Activated CD4-positive, alpha-beta T cell treated with anti-CD3 and anti-CD28 coated beads for 36 hours (primary cell): ENCODE measurements at regions of chr9 and their contacts with region 1.

Region 1: GRCh38 chr9:125631391-125632085 is 75.5 kb downstream of the MAPKAP1 start:
- DNase-seq: peak; percentile 59
- ATAC-seq: peak; percentile 51
- H3K4me3 Mint-ChIP-seq: no peak overlapping the region
- H3K27ac Mint-ChIP-seq: peak overlapping the region; percentile 26
- H3K4me1 Mint-ChIP-seq: peaks cover 83% of the 10 kb centered on the region
- H3K27me3 Mint-ChIP-seq: no peaks in the 10 kb centered on the region

Region 2: DNA sequence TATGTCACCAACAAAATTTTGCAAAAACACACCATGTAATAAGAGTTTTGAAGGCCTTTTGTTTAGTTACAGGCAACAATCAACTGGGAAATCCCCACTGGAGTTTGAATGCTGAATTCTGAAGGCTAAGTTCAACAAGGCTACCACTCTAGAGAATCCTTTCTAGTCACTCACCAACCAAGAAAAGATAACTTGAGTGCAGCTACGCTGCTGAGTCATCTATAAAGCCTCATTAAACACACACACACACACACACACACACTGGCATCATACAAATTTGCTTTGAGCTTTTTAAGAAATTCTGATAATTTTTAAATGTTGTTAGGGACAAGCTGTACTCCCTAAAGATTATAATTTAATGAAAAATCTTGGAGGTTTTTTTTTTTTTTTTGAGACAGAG is 1921.2 kb before region 1 on chr9:
- CTCF ChIA-PET with region 1: no interaction called
- POLR2A ChIA-PET with region 1: no interaction called
- intact Hi-C with region 1: no loop called
- DNase-seq: no peak
- ATAC-seq: no peak
- H3K4me3 Mint-ChIP-seq: no peak overlapping the region
- H3K27ac Mint-ChIP-seq: no peak overlapping the region
- H3K4me1 Mint-ChIP-seq: peaks cover 2% of the 10 kb centered on the region
- H3K27me3 Mint-ChIP-seq: no peaks in the 10 kb centered on the region

Region 3: DNA sequence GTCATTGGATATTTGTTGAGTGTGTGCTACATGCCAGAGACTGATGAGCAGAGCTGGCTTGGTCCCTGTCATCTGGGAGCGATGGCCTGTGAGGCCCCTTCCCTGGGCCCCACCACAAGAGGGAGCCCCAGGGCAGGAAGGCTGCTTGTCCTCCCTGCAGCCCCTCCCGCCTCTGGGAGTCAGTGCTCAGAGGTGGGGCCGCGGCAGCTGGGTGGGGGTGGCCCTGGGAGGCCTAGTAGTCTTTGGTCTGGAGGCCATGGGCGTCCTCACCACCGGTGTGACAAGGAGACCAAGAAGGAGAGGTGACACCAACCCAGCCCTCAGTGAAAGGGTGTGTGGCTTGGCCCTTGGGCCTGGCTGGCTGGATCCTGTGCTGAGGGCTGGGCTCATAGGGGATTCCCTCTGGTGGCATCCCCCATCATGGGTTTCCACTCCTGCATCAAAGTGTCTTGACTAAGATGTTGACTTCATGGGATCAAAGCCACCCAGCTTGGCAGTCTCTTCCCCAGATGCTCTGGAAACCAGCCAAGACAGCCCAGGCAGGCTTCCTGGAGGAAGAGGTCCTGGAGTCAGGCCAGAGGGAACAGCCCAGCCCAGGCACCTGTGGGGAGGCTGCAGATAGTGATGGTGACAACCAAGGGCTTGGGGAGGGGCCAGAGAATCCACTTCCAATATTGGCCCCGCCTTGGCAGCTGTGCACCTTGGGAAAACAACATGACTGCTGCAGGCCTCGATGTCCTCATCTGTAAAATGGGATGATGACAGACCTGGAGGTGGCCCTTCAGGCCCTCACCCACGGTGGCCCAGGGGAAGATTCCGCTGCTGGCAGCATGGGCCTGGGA is 203.3 kb before region 1 on chr9:
- CTCF ChIA-PET with region 1: no interaction called
- POLR2A ChIA-PET with region 1: no interaction called
- intact Hi-C with region 1: loop called in 1 of 2 experiments (anchors 1 kb)
- DNase-seq: peak; percentile 61
- ATAC-seq: peak; percentile 47
- H3K4me3 Mint-ChIP-seq: no peak overlapping the region
- H3K27ac Mint-ChIP-seq: no peak overlapping the region
- H3K4me1 Mint-ChIP-seq: no peaks in the 10 kb centered on the region
- H3K27me3 Mint-ChIP-seq: no peaks in the 10 kb centered on the region

Region 4: GRCh38 chr9:125558453-125559092 is 73.0 kb before region 1 on chr9:
- CTCF ChIA-PET with region 1: interaction called, 11 read pairs
- POLR2A ChIA-PET with region 1: no interaction called
- intact Hi-C with region 1: loop called (anchors 1 kb)
- DNase-seq: peak; percentile 71
- ATAC-seq: peak; percentile 72
- H3K4me3 Mint-ChIP-seq: no peak overlapping the region
- H3K27ac Mint-ChIP-seq: no peak overlapping the region
- H3K4me1 Mint-ChIP-seq: peaks cover 11% of the 10 kb centered on the region
- H3K27me3 Mint-ChIP-seq: no peaks in the 10 kb centered on the region

Region 5: DNA sequence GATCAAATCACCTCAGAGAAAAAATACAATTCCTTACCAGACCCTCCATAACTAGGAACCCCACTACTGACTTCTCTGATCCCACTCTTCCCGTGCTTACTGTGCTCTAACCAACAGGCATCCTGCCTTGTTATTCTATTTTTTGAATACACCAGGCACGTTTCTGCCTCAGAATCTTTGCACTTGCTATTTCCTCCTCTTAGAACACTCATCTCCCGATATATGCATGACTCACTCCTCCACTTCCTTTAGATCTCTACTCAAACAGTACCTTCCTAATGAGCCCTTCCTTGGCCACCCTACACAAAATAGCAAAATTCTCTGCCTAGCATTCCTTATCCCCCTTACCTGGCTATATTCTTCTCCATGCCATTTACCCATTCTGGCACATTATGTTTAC is 31.6 kb after region 1 on chr9:
- CTCF ChIA-PET with region 1: interaction called, 4 read pairs
- POLR2A ChIA-PET with region 1: no interaction called
- intact Hi-C with region 1: loop called (anchors 1 to 5 kb)
- DNase-seq: no peak
- ATAC-seq: peak; percentile 80
- H3K4me3 Mint-ChIP-seq: no peak overlapping the region
- H3K27ac Mint-ChIP-seq: peak overlapping the region; percentile 39
- H3K4me1 Mint-ChIP-seq: peaks cover 11% of the 10 kb centered on the region
- H3K27me3 Mint-ChIP-seq: no peaks in the 10 kb centered on the region

Region 6: GRCh38 chr9:125706661-125707471 is 75.3 kb after region 1 on chr9 and contains the start of gene MAPKAP1:
- CTCF ChIA-PET with region 1: no interaction called
- POLR2A ChIA-PET with region 1: interaction called, 5 read pairs
- intact Hi-C with region 1: loop called in 1 of 2 experiments (anchors 1 kb)
- DNase-seq: peak; percentile 97
- ATAC-seq: peak; percentile 100
- H3K4me3 Mint-ChIP-seq: peak within 1 kb of the TSS; percentile 86
- H3K27ac Mint-ChIP-seq: peak within 1 kb of the TSS; percentile 83
- H3K4me1 Mint-ChIP-seq: peaks cover 44% of the 10 kb centered on the region
- H3K27me3 Mint-ChIP-seq: no peaks in the 10 kb centered on the region
- total RNA-seq, gene MAPKAP1: 51.6 to 61.9 TPM

Region 7: GRCh38 chr9:126471084-126471624 is 839.6 kb after region 1 on chr9:
- CTCF ChIA-PET with region 1: no interaction called
- POLR2A ChIA-PET with region 1: no interaction called
- intact Hi-C with region 1: loop called in 1 of 2 experiments (anchors 2 kb)
- DNase-seq: peak; percentile 89
- ATAC-seq: peak; percentile 92
- H3K4me3 Mint-ChIP-seq: peak overlapping the region; percentile 39
- H3K27ac Mint-ChIP-seq: no peak overlapping the region
- H3K4me1 Mint-ChIP-seq: peaks cover 60% of the 10 kb centered on the region
- H3K27me3 Mint-ChIP-seq: peaks cover 6% of the 10 kb centered on the region